ENCODE measurements at regions of chr15 and their contacts with region 1.

Region 1: DNA sequence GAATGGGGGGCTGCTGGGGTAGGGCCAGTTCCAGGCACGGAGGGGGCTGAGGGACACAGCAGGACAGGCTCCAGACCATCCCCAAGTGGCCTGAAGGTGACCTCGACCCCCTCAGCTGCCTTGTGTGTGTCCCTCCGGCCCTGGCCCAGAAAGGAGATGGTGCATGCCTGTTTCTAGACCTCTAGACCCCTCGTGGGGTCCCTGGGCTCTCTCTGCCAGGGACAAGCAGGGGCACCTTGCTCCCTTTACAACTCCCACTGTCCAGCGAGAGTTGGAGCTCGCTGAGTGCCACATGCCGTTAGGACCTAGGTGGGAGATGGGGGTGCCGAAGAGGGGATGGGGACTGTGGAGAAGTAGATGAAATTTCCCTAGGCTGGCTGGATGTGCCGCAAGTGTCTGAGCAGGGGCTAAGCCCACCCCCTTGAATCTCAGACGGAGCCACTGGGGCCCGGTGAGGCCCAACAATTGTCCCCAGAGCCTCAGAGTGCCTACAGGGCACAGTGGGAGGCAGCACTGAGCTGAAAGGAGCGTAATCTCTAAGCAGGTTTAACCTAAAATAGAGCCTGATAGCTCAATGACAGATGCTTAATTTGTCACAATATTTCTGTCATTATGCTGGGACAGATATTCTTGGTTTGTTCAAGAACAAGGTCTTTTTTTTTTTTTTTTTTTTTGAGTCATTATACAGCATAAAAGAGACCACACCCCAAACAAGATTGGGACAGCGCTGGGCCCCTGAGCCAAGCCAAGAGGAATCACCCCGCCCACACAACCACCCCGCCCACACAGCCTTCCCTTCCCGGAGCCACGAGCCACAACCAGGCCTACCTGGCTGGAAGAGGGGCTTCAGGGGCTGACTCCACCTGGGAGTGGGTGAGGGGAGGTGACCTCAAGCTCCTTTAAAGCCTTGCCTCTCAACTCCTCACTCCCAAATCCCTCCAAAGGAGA is 23.6 kb upstream of the KLF13 start:
- DNase-seq: peak; percentile 79
- ATAC-seq: peak; percentile 62

Region 2: DNA sequence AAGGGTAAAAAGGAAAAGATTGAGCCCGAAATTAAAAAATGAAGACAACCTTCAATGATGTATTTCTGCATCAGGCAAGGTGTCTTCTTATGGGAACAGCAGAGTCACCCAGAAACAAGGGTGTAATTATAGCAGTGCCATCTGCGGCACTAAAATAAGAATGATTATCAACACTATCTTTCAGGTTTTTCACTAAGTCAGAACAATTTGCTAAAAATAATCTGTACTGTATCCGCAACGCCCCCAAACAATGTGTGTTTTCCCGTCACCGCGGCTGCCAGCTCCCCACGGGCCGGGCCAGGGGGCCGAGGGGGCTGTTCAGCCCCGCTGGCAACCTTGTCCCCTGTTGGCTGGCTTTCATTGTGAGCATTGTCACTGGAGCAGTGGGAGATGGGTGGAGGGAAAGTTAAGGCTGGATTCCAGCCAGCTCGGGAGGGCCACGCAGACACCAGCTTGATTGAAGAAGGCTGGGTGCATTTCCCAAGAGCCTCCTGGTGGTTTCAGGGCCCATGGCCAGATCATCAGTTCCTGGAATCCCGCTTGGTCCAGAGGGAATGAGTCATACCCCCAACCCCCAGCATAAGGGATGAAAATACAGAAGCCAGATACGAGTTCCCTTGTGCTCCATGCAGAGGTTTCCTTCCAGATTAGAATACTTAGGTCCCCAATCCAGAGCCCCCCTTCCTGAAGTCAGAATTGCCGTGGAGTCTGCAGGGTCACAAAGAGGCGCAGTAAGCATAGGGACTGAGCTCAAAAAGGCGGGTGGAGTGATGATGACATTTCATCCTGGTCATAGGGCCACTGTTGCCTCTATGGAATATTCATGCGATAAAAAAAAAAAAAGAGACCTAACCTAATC is 66.6 kb before region 1 on chr15:
- intact Hi-C with region 1: loop called (anchors 10 kb)
- DNase-seq: peak; percentile 80
- ATAC-seq: peak; percentile 92